ENCODE measurements at regions of chr1 and their contacts with region 1.

Region 1: GRCh38 chr1:160539990-160540858 is 17.2 kb upstream of the SLAMF6 start:
- DNase-seq: peak; percentile 69
- H3K4me3 Mint-ChIP-seq: peak overlapping the region; percentile 42
- H3K27ac Mint-ChIP-seq: peak overlapping the region; percentile 92
- H3K4me1 Mint-ChIP-seq: peaks cover 52% of the 10 kb centered on the region
- H3K27me3 Mint-ChIP-seq: no peaks in the 10 kb centered on the region

Region 2: DNA sequence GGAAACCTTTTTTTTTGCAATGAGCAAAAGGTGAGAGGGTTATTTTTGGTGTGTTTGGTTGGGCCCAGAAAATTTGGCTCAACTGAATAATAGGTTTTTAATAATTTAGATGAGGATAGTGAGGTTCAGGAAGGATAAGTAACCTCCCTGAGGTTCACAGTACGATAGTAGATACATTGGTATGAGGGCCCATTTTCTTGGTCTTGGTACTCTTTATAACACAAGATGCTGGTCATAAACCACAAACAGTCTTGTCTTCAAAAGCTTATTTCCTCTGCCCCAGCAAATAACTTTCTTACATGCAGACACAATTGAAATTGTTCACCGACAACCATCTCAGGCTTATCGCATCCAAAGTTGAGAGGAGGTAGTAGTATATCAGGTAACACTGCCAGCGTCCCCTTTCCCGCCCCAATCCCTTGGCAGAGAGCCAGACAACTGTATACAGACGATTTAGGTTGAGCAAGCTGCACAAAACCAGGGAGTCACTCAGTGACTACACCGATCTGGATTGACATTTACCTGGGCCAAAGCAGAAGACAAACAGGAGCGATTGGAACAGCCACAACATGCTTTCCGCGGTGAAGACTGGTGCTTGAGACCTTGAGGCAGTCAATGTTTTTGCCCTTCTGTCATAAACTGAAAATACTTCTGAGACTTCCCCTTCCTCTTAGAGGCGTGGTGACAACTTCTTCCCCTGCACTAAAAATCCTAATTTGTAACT is 17.4 kb before region 1 on chr1 and contains the start of gene SLAMF6:
- CTCF ChIA-PET with region 1: interaction called, 7 read pairs
- POLR2A ChIA-PET with region 1: interaction called, 32 read pairs
- DNase-seq: peak; percentile 55
- H3K4me3 Mint-ChIP-seq: peak within 1 kb of the TSS; percentile 84
- H3K27ac Mint-ChIP-seq: peak within 1 kb of the TSS; percentile 93
- H3K4me1 Mint-ChIP-seq: peaks cover 64% of the 10 kb centered on the region
- H3K27me3 Mint-ChIP-seq: no peaks in the 10 kb centered on the region
- total RNA-seq, gene SLAMF6: 32.0 to 33.8 TPM

Region 3: GRCh38 chr1:160550572-160551034 is 10.4 kb after region 1 on chr1:
- CTCF ChIA-PET with region 1: interaction called, 38 read pairs
- POLR2A ChIA-PET with region 1: interaction called, 5 read pairs
- DNase-seq: peak; percentile 62
- H3K4me3 Mint-ChIP-seq: no peak overlapping the region
- H3K27ac Mint-ChIP-seq: no peak overlapping the region
- H3K4me1 Mint-ChIP-seq: peaks cover 2% of the 10 kb centered on the region
- H3K27me3 Mint-ChIP-seq: no peaks in the 10 kb centered on the region

Region 4: GRCh38 chr1:160558660-160559380 is 18.6 kb after region 1 on chr1:
- CTCF ChIA-PET with region 1: interaction called, 38 read pairs
- POLR2A ChIA-PET with region 1: interaction called, 6 read pairs
- DNase-seq: no peak
- H3K4me3 Mint-ChIP-seq: peak overlapping the region; percentile 66
- H3K27ac Mint-ChIP-seq: peak overlapping the region; percentile 80
- H3K4me1 Mint-ChIP-seq: peaks cover 56% of the 10 kb centered on the region
- H3K27me3 Mint-ChIP-seq: no peaks in the 10 kb centered on the region

Region 5: GRCh38 chr1:160607011-160607671 is 66.9 kb after region 1 on chr1:
- CTCF ChIA-PET with region 1: interaction called, 48 read pairs
- POLR2A ChIA-PET with region 1: interaction called, 13 read pairs
- DNase-seq: peak; percentile 70
- H3K4me3 Mint-ChIP-seq: no peak overlapping the region
- H3K27ac Mint-ChIP-seq: peak overlapping the region; percentile 58
- H3K4me1 Mint-ChIP-seq: peaks cover 59% of the 10 kb centered on the region
- H3K27me3 Mint-ChIP-seq: no peaks in the 10 kb centered on the region

Region 6: DNA sequence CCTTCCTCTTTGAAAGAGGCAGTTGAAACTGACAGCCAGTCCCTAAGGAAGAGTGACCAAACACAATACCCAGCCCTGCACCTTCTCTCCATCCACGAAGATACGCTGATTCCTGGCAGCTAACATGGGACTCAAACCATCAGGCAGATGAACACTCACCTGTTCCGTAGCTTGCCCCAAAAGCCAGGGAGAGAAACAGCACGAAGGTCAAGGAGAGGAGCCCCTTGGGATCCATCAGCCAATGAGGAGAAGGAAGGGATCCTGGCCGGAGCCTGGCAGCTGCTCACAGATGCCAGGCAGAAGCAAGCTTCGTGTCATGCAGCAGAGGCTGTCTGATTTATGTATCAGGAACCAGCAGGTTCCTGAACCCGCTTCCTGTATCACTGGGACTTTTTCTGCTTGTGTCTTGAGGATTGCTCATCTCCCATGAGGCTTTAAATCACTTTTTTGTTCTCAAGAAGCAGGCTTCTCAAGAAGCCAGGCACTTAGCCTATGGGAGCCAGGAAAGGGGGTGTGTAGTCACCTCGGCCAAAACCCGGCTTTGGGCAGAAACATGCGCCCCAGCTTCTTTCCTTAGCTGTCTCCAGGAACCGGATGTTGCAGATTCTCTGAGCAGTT is 106.6 kb after region 1 on chr1 and contains the start of gene SLAMF1:
- CTCF ChIA-PET with region 1: no interaction called
- POLR2A ChIA-PET with region 1: interaction called, 11 read pairs
- DNase-seq: peak; percentile 49
- H3K4me3 Mint-ChIP-seq: peak within 1 kb of the TSS; percentile 88
- H3K27ac Mint-ChIP-seq: peak within 1 kb of the TSS; percentile 89
- H3K4me1 Mint-ChIP-seq: peaks cover 53% of the 10 kb centered on the region
- H3K27me3 Mint-ChIP-seq: no peaks in the 10 kb centered on the region
- total RNA-seq, gene SLAMF1: 106 to 113 TPM

Measured in activated CD4-positive, alpha-beta memory T cell treated with anti-CD3 and anti-CD28 coated beads, Interleukin-2, amount 10 ng/mL, durations not matched to agents 7 days and 5 days (primary cell).